Caco-2 (cell line): ENCODE measurements at regions of chr6 and their contacts with region 1.

Region 1: GRCh38 chr6:70884074-70884983 is 72.5 kb downstream of the B3GAT2 start:
- DNase-seq: peak; percentile 55 to 76
- H3K4me3 ChIP-seq: no peak overlapping the region
- H3K4me3 Mint-ChIP-seq: no peak overlapping the region
- H3K27ac Mint-ChIP-seq: no peak overlapping the region
- H3K4me1 ChIP-seq: no peaks in the 10 kb centered on the region
- H3K4me1 Mint-ChIP-seq: no peaks in the 10 kb centered on the region
- H3K27me3 ChIP-seq: no peaks in the 10 kb centered on the region; the same call in 1 of the 2 replicates
- H3K27me3 Mint-ChIP-seq: peaks cover 6% of the 10 kb centered on the region
- CTCF ChIP-seq: peak; percentile 78 to 88

Region 2: GRCh38 chr6:70310063-70310694 is 574.1 kb before region 1 on chr6:
- CTCF ChIA-PET with region 1: interaction called, 5 read pairs
- POLR2A ChIA-PET with region 1: no interaction called
- intact Hi-C with region 1: loop called (anchors 1 kb)
- DNase-seq: peak in 1 of 2 experiments; percentile 39
- H3K4me3 ChIP-seq: no peak overlapping the region
- H3K4me3 Mint-ChIP-seq: no peak overlapping the region
- H3K27ac Mint-ChIP-seq: no peak overlapping the region
- H3K4me1 ChIP-seq: no peaks in the 10 kb centered on the region
- H3K4me1 Mint-ChIP-seq: peaks cover 6% of the 10 kb centered on the region
- H3K27me3 ChIP-seq: no peaks in the 10 kb centered on the region
- H3K27me3 Mint-ChIP-seq: peaks cover 13% of the 10 kb centered on the region
- CTCF ChIP-seq: peak; percentile 19 to 52

Region 3: DNA sequence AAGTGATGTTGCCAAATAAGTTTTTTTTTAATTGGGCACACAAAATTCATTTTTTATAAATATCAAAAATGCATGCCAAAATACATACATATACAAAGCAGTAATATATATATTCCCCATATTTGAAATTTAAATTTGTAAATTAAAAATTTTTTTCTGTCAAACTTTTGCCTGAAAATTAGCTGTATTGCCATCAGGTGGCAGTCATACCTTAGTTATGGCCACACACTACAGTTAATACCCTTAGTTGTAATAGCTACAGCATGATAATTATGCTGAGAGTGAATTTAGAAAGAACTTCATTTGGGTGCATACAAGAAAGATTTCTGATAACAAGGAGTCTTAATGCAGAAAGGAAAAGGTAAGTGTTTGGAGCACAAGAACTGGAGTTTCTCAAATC is 363.8 kb before region 1 on chr6:
- CTCF ChIA-PET with region 1: interaction called, 9 read pairs
- POLR2A ChIA-PET with region 1: no interaction called
- intact Hi-C with region 1: loop called (anchors 1 kb)
- DNase-seq: no peak
- H3K4me3 ChIP-seq: no peak overlapping the region
- H3K4me3 Mint-ChIP-seq: no peak overlapping the region
- H3K27ac Mint-ChIP-seq: no peak overlapping the region
- H3K4me1 ChIP-seq: no peaks in the 10 kb centered on the region
- H3K4me1 Mint-ChIP-seq: no peaks in the 10 kb centered on the region
- H3K27me3 ChIP-seq: no peaks in the 10 kb centered on the region
- H3K27me3 Mint-ChIP-seq: no peaks in the 10 kb centered on the region
- CTCF ChIP-seq: peak; percentile 23 to 33

Region 4: GRCh38 chr6:70547313-70547712 is 337.0 kb before region 1 on chr6:
- CTCF ChIA-PET with region 1: no interaction called
- POLR2A ChIA-PET with region 1: no interaction called
- intact Hi-C with region 1: loop called (anchors 1 kb)
- DNase-seq: no peak
- H3K4me3 ChIP-seq: no peak overlapping the region
- H3K4me3 Mint-ChIP-seq: no peak overlapping the region
- H3K27ac Mint-ChIP-seq: no peak overlapping the region
- H3K4me1 ChIP-seq: no peaks in the 10 kb centered on the region
- H3K4me1 Mint-ChIP-seq: no peaks in the 10 kb centered on the region
- H3K27me3 ChIP-seq: no peaks in the 10 kb centered on the region
- H3K27me3 Mint-ChIP-seq: no peaks in the 10 kb centered on the region
- CTCF ChIP-seq: peak; percentile 25 to 67

Region 5: GRCh38 chr6:70706491-70707123 is 177.7 kb before region 1 on chr6:
- CTCF ChIA-PET with region 1: interaction called, 5 read pairs
- POLR2A ChIA-PET with region 1: no interaction called
- intact Hi-C with region 1: loop called (anchors 1 kb)
- DNase-seq: peak in 1 of 2 experiments; percentile 23
- H3K4me3 ChIP-seq: no peak overlapping the region
- H3K4me3 Mint-ChIP-seq: no peak overlapping the region
- H3K27ac Mint-ChIP-seq: no peak overlapping the region
- H3K4me1 ChIP-seq: no peaks in the 10 kb centered on the region
- H3K4me1 Mint-ChIP-seq: peaks cover 6% of the 10 kb centered on the region
- H3K27me3 ChIP-seq: no peaks in the 10 kb centered on the region
- H3K27me3 Mint-ChIP-seq: no peaks in the 10 kb centered on the region
- CTCF ChIP-seq: peak; percentile 25 to 53